Activated CD4-positive, alpha-beta memory T cell treated with anti-CD3 and anti-CD28 coated beads, Interleukin-2, amount 10 ng/mL, durations not matched to agents 7 days and 5 days (primary cell): ENCODE measurements at regions of chr2 and their contacts with region 1.

Region 1: DNA sequence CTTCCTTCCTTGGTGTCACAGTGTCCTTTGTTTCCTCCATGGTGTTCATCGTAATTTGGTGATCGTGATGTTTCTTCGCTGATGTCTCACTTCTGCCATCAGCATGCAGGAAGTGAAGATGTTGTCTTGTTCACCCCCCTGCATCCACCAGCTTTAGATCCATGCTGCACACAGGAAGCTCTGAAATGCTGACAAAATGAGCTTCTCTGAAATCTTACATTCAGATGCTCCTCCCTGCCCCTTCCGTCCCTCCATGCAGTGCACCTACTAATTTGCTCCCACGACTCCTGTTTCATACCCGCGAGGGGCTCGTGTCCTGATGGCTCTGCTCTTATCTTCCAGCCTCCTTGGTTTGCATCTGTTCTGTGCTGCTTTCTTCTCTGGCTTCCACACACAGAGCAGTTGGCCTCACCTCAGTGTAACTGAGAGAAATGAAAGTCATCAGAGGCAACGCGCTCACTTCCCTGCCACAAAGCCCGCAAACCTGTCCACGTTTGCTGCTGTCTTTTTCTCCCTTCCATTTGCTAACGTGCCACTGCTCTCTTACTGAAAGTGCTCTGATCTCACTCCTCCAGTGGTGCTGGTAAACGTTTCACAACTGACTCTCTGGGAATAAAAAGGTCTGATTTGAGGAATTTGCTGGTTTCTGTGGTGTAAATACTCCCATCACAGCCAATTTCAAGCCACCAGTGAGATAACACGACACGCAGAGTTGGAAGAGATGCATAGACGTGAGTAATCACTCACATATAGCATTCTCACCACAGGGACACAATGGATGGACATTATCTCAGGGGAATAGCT is 41.0 kb upstream of the MGAT4A start:
- DNase-seq: peak; percentile 74
- H3K4me3 Mint-ChIP-seq: peak overlapping the region; percentile 97
- H3K27ac Mint-ChIP-seq: peak overlapping the region; percentile 98
- H3K4me1 Mint-ChIP-seq: peaks cover 63% of the 10 kb centered on the region
- H3K27me3 Mint-ChIP-seq: no peaks in the 10 kb centered on the region

Region 2: DNA sequence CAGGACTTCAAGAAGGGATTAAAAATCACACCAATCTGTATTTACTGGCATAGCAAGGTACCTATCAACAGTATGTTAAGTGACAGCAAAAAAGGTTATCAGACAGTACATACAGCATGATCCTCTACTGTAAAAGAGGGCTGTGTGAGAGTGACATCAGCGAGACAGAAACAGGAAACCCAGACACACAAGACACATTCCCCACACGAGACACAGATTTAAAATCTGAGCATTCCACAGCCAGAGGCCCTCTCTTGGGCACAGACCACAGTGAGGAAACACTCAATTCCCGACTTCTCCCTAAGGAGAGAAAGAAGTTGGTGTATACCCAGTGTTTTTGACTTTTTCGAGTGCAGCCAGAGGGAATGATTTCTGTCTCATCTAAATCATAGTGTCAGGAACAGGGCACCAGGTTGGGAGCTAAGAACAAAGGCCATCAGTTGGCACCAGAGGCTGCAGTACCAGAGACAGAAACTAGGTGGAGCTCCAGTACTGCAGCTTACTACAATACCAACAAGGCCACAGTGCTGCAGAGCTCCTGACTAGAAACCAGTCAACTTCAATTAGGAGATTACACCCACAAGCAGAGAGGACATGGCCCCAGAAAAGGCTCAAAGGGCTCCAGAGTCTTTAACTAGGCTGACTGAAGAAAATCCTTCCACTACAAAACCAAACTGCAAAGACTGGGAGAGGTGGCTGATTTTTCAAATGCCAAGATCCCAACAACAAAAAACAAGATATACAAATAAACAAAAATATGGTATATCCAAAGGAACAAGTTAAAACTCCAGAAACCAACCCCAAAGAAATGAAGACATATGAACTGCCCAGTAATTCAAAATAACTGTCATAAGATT is 122.6 kb before region 1 on chr2:
- CTCF ChIA-PET with region 1: interaction called, 17 read pairs
- POLR2A ChIA-PET with region 1: interaction called, 10 read pairs
- DNase-seq: peak; percentile 86
- H3K4me3 Mint-ChIP-seq: no peak overlapping the region
- H3K27ac Mint-ChIP-seq: peak overlapping the region; percentile 36
- H3K4me1 Mint-ChIP-seq: peaks cover 50% of the 10 kb centered on the region
- H3K27me3 Mint-ChIP-seq: no peaks in the 10 kb centered on the region

Region 3: DNA sequence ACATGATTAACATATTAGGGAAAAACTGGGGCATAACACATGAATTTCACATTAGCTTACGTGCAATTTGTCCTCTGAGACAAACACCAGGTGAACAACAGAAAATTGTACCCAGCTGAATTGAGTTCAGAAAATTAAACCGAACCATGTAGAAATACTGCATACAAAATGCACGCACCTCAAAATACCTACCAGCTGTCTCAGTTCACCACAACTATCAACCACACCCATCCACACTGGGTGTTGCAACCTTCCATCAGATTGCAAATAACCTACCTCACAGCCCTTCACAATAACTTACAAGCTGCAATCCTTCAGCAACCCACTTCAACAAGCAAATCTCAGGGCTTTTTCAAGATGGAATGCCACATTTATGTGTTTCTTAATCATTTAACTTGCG is 107.6 kb before region 1 on chr2:
- CTCF ChIA-PET with region 1: interaction called, 5 read pairs
- POLR2A ChIA-PET with region 1: interaction called, 35 read pairs
- DNase-seq: peak; percentile 79
- H3K4me3 Mint-ChIP-seq: peak overlapping the region; percentile 58
- H3K27ac Mint-ChIP-seq: peak overlapping the region; percentile 99
- H3K4me1 Mint-ChIP-seq: peaks cover 66% of the 10 kb centered on the region
- H3K27me3 Mint-ChIP-seq: no peaks in the 10 kb centered on the region

Region 4: GRCh38 chr2:98757904-98758421 is 14.0 kb before region 1 on chr2:
- CTCF ChIA-PET with region 1: interaction called, 15 read pairs
- POLR2A ChIA-PET with region 1: interaction called, 77 read pairs
- DNase-seq: peak; percentile 67
- H3K4me3 Mint-ChIP-seq: peak overlapping the region; percentile 55
- H3K27ac Mint-ChIP-seq: peak overlapping the region; percentile 82
- H3K4me1 Mint-ChIP-seq: peaks cover 58% of the 10 kb centered on the region
- H3K27me3 Mint-ChIP-seq: no peaks in the 10 kb centered on the region

Region 5: GRCh38 chr2:98867539-98868309 is 95.8 kb after region 1 on chr2:
- CTCF ChIA-PET with region 1: no interaction called
- POLR2A ChIA-PET with region 1: no interaction called
- DNase-seq: no peak
- H3K4me3 Mint-ChIP-seq: no peak overlapping the region
- H3K27ac Mint-ChIP-seq: no peak overlapping the region
- H3K4me1 Mint-ChIP-seq: peaks cover 11% of the 10 kb centered on the region
- H3K27me3 Mint-ChIP-seq: peaks cover 16% of the 10 kb centered on the region